Dorsolateral prefrontal cortex (tissue), 120 donors: ENCODE measurements at regions of chr19 and their contacts with region 1.

Region 1: GRCh38 chr19:3544742-3545668 is 6.0 kb downstream of the TEKTIP1 start:
- DNase-seq: peak; percentile 62 to 91 (median 86)
- H3K4me3 ChIP-seq: peak overlapping the region in 50 of 59 donors; percentile 7 to 65 (median 42)
- H3K27ac ChIP-seq: peak overlapping the region in 58 of 59 donors; percentile 76 to 100 (median 95)
- H3K27me3 ChIP-seq: no peaks in the 10 kb centered on the region
- CTCF ChIP-seq: peak; percentile 68 to 100 (median 95)

Region 2: GRCh38 chr19:3505598-3506383 is 39.2 kb before region 1 on chr19 and contains the start of gene FZR1:
- intact Hi-C with region 1: loop called in 1 of 2 experiments (anchors 5 kb)
- DNase-seq: peak; percentile 98 to 100 (median 99)
- H3K4me3 ChIP-seq: peak within 1 kb of the TSS; percentile 74 to 99 (median 91)
- H3K27ac ChIP-seq: peak within 1 kb of the TSS in 55 of 59 donors; percentile 58 to 93 (median 85)
- H3K27me3 ChIP-seq: no peaks in the 10 kb centered on the region
- CTCF ChIP-seq: peak in 26 of 56 donors; percentile 5 to 53 (median 18)
- total RNA-seq, gene FZR1: 46.4 to 99.1 (median 71.7) TPM

Region 3: DNA sequence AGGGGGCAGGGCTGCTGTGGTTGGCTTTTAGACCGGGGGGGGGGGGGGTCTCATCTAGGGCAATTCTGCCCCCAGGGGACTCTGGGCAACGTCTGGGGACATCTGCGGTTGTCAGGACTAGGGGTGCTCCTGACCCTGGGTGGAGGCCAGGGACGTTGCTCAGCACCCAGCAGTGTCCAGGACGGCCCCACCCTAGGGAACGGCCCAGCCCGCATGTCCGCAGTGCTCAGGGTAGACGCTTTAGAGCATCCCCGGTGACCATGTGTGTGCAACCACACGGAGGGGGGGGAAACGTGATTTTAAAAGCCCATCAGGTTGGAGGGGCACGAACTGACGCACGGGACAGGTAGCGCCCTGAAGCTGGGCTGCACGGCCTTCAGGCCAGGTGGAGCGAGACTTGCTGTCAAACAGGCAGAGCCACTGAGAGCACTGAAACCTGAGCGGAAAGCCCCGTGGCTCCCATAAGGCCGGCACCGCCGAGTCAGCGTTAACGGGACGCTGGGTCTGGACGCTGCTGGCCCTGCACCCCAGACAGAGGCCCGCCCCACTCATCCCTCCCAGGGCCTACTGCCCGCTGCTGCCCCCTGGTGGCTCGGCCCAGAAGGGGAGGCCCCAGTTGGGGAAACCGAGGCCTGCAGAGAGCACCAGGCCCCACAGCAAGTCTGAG is 73.3 kb after region 1 on chr19:
- intact Hi-C with region 1: loop called (anchors 2 to 5 kb)
- DNase-seq: peak in 8 of 10 donors; percentile 31 to 69 (median 52)
- H3K4me3 ChIP-seq: peak overlapping the region in 1 of 59 donors; percentile 2
- H3K27ac ChIP-seq: peak overlapping the region in 11 of 59 donors; percentile 1 to 67 (median 49)
- H3K27me3 ChIP-seq: no peaks in the 10 kb centered on the region
- CTCF ChIP-seq: peak; percentile 68 to 99 (median 94)